Right ventricle myocardium superior (tissue), 1 donor: ENCODE measurements at regions of chr20 and their contacts with region 1.

Region 1: DNA sequence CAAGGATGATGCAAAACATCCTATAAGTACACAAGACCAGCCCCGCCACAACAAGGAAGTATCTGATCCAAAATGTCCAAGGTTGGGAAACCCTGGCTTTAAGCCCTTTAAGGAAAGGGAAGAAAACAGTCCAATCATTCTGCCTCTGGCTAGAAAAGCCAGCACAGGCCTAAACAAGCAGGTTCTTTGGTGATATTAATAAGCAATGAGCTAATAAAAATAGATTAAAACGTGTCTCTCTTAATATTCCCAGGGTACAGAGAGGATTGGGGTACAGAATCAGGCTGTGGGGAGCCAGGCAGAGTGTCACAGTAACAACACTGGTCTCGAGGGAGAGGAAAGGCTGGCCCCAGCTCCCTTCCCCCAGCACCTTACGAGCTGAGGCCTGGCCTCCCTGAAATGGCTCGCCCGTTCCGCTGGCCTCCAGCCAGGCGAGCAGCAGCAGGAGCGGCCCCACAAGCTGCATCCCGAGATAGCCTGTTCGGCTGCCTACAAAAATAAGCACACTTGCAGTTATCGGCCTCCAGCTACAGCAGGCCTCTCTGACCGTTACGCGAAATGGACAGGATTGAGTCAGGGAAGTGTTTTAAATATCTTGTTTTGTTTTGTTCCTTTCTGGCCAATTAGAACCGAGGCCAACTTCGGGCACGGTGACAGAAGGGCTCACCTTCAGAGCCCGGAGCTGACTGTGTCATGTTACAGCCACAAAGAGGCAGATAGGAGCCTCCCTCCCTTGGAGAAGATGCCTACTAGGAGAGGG is 4.0 kb upstream of the ZMYND8 start:
- DNase-seq: peak; percentile 94
- ATAC-seq: peak; percentile 62

Region 2: DNA sequence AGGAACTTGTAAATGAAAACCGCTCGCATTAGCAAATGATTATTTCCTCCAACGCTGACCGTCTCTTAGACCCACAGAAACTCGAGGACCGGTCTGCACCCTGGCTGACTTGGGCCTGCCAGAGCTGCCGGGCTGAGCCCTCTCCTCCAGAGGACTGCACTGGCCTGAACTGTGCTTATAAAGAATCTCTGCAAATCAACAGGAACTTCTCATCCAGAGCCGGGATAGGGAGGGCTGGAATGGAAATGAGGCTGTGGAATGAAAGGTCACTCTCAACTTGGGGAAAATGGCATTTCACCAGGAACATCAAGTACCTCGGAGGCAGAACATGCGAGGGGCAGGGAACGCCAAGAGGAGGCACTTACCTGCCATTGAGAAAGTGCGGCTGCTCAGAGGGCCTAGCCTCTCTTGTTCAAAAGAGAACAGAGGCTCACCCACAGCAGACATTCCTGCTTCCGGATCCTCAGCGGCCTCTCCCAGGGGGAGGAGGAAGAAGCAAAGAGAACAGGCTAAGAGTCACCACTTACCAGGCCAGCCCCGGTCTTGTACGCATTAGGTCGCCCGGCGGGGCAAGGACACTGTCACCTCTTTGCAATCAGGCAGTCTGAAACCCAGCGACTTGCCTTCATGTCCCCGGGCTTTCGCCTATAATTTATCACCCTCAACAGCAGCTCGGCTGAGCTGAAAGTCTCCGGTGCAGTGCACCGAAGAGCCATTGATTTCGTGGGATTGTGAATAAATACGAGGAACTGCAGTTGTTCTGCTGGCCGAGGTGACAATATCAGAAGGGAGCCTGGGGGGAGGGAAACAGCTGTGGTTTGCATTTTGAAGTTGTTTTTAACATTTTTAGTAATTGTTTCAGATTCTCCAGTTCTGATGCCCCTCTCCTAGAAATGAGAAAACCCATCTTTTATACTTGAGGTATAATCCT is 41.6 kb before region 1 on chr20:
- intact Hi-C with region 1: loop called (anchors 1 kb)
- DNase-seq: peak; percentile 85
- ATAC-seq: peak; percentile 75

Region 3: GRCh38 chr20:47479506-47479905 is 119.0 kb after region 1 on chr20:
- intact Hi-C with region 1: no loop called
- DNase-seq: no peak
- ATAC-seq: peak; percentile 62